ENCODE measurements at regions of chr13 and their contacts with region 1.

Region 1: DNA sequence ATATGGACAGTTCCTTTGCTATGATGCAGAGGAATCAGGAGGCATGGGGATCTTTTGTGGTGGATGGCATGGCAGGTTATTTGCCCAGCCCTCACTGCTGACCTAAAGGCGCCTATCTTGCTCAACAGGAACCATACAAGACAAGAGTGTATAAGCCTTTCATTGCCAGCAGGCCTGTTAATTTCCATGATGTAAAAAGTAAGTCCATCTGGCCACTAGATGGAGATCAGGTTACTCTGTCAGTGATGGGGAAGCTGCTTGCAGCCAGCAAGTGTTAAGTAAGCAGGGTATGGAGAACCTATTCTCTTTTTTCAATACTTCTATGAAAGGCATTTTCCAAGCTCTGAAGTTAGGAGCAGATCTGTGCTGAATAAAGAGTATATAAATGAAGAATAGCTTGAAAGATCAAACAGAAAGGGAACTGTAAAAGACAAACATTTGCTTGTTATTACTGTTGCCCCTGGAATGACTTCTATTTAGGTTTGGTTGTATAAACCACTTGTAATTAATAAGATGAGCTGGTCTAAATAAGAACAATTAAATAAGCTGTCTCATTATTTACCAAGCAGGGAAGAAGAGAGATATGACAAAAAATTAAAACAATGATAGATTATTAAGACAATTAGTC is 210.9 kb downstream of the RGCC start:
- DNase-seq: peak; percentile 85
- H3K4me3 Mint-ChIP-seq: no peak overlapping the region
- H3K27ac Mint-ChIP-seq: no peak overlapping the region
- H3K4me1 Mint-ChIP-seq: peaks cover 7% of the 10 kb centered on the region
- H3K27me3 Mint-ChIP-seq: no peaks in the 10 kb centered on the region

Region 2: GRCh38 chr13:41905600-41906254 is 237.5 kb after region 1 on chr13:
- intact Hi-C with region 1: loop called (anchors 5 kb)
- DNase-seq: no peak
- H3K4me3 Mint-ChIP-seq: no peak overlapping the region
- H3K27ac Mint-ChIP-seq: no peak overlapping the region
- H3K4me1 Mint-ChIP-seq: peaks cover 9% of the 10 kb centered on the region
- H3K27me3 Mint-ChIP-seq: no peaks in the 10 kb centered on the region

Region 3: DNA sequence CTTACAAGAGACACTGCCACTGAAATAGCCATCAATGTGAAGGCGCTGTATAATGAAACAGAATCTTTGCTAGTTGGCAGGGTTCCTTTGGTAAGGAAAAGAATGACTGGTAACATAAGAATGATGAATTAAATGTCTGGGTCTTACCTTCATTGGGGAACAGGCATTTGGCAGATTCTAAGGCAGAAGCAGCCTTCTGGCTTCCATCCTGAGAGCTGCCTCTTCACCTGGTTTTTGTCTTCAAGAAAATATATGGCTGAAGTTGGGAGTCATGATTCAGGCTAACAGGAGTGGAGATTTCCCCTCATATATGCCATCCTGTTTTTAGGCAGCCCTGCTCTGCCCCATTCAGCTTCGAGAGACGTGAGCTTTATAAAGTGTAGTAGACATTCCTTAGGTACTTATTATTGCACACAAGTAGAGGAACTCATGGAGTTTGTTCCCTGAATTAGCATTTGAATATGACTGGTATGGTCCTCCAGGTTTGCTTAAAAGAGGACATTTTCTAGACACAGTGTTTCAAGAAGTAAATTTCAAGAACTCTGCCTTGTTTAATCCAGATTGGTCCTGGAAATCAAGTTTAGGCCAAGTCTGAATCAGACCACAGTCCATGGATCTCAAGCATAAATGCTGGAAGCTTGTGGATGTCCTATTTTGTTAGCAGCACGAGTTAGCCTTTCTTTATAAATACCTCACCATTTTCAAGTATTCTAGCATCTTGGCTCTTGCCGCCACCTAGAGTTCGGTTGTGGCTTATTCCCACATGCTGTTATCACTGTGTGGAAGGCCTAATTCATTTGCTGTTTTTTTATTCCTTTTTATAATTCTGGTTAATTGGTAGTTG is 547.6 kb after region 1 on chr13:
- intact Hi-C with region 1: loop called (anchors 5 kb)
- DNase-seq: peak; percentile 77
- H3K4me3 Mint-ChIP-seq: no peak overlapping the region
- H3K27ac Mint-ChIP-seq: no peak overlapping the region
- H3K4me1 Mint-ChIP-seq: peaks cover 2% of the 10 kb centered on the region
- H3K27me3 Mint-ChIP-seq: no peaks in the 10 kb centered on the region

Measured in activated CD4-positive, alpha-beta T cell treated with anti-CD3 and anti-CD28 coated beads, Interleukin-2, amount 10 ng/mL, durations not matched to agents 24 days and 14 days (primary cell).